ENCODE measurements at regions of chr5 and their contacts with region 1.

Region 1: GRCh38 chr5:172714491-172715421 is 56.2 kb downstream of the DUSP1 start:
- DNase-seq: peak; percentile 57 to 82 (median 75)
- H3K4me3 ChIP-seq: peak overlapping the region in 1 of 59 donors; percentile 10
- H3K27ac ChIP-seq: peak overlapping the region in 55 of 59 donors; percentile 3 to 88 (median 70)
- H3K27me3 ChIP-seq: no peaks in the 10 kb centered on the region
- CTCF ChIP-seq: peak; percentile 60 to 95 (median 84)

Region 2: GRCh38 chr5:172777881-172778814 is 63.4 kb after region 1 on chr5:
- intact Hi-C with region 1: no loop called
- DNase-seq: no peak
- H3K4me3 ChIP-seq: no peak overlapping the region
- H3K27ac ChIP-seq: peak overlapping the region in 27 of 59 donors; percentile 4 to 81 (median 51)
- H3K27me3 ChIP-seq: no peaks in the 10 kb centered on the region
- CTCF ChIP-seq: no peak

Region 3: GRCh38 chr5:172820046-172820767 is 105.5 kb after region 1 on chr5:
- intact Hi-C with region 1: no loop called
- DNase-seq: peak in 5 of 10 donors; percentile 19 to 74 (median 43)
- H3K4me3 ChIP-seq: no peak overlapping the region
- H3K27ac ChIP-seq: peak overlapping the region in 3 of 59 donors; percentile 29 to 55 (median 39)
- H3K27me3 ChIP-seq: no peaks in the 10 kb centered on the region
- CTCF ChIP-seq: no peak

Region 4: DNA sequence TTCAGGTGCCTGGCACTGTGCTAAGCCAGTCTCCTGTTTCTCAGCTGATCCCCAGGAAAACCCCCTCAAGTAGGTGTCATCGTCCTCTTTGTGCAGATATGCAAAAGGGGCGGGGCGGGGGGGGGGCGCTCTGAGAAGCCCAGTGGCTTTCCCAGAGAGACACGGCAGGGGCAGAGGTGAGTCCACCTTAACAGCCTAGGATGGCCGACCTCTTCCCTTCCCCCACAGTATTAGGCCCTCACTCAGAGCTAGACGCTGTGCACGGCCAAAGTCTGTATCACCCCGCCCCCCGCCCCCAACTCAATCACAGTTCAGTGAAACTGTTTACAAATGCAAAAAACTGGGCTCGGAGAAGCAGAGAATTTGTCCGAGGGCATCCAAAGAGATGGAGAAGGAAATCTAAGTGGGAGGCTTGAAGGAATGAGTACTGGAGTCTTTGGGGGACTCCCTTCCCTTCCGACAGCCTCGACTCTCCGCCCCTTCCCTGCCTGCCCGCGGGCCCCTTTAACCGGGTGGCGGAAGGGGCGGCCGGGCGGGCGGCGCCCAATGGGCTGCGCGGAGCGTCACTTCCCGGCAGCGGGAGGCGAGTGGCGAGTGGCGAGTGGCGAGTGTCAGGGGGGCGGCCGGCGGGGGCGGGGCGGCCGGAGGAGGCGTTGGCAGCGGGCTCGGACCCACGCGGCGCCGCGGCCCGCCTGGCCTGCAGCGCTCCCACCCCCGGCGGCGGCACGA is 119.1 kb after region 1 on chr5 and contains the start of gene ERGIC1:
- intact Hi-C with region 1: loop called in 1 of 2 experiments (anchors 5 kb)
- DNase-seq: peak; percentile 73 to 95 (median 84)
- H3K4me3 ChIP-seq: peak within 1 kb of the TSS; percentile 69 to 94 (median 83)
- H3K27ac ChIP-seq: peak within 1 kb of the TSS; percentile 6 to 92 (median 80)
- H3K27me3 ChIP-seq: no peaks in the 10 kb centered on the region
- CTCF ChIP-seq: peak in 5 of 56 donors; percentile 11 to 25 (median 14)
- total RNA-seq, gene ERGIC1: 48.4 to 109 (median 68.1) TPM

Region 5: GRCh38 chr5:172902497-172903200 is 187.9 kb after region 1 on chr5:
- intact Hi-C with region 1: loop called in 1 of 2 experiments (anchors 10 kb)
- DNase-seq: peak in 7 of 10 donors; percentile 36 to 71 (median 61)
- H3K4me3 ChIP-seq: no peak overlapping the region
- H3K27ac ChIP-seq: peak overlapping the region in 39 of 59 donors; percentile 7 to 91 (median 48)
- H3K27me3 ChIP-seq: no peaks in the 10 kb centered on the region
- CTCF ChIP-seq: peak in 47 of 56 donors; percentile 11 to 64 (median 37)

Region 6: GRCh38 chr5:173057062-173057924 is 342.5 kb after region 1 on chr5:
- intact Hi-C with region 1: loop called in 1 of 2 experiments (anchors 10 kb)
- DNase-seq: peak; percentile 97 to 99 (median 98)
- H3K4me3 ChIP-seq: peak overlapping the region; percentile 73 to 100 (median 95)
- H3K27ac ChIP-seq: peak overlapping the region; percentile 93 to 100 (median 99)
- H3K27me3 ChIP-seq: no peaks in the 10 kb centered on the region
- CTCF ChIP-seq: peak in 25 of 56 donors; percentile 7 to 42 (median 18)

Region 7: GRCh38 chr5:173283318-173284288 is 568.8 kb after region 1 on chr5:
- intact Hi-C with region 1: loop called (anchors 5 to 10 kb)
- DNase-seq: peak in 9 of 10 donors; percentile 18 to 83 (median 48)
- H3K4me3 ChIP-seq: peak overlapping the region; percentile 12 to 65 (median 45)
- H3K27ac ChIP-seq: no peak overlapping the region
- H3K27me3 ChIP-seq: peaks cover 0 to 62% (median 11%) of the 10 kb centered on the region in 45 donors
- CTCF ChIP-seq: peak; percentile 43 to 88 (median 76)